Heart left ventricle (tissue), 16 donors: ENCODE measurements at regions of chr10 and their contacts with region 1.

Region 1: DNA sequence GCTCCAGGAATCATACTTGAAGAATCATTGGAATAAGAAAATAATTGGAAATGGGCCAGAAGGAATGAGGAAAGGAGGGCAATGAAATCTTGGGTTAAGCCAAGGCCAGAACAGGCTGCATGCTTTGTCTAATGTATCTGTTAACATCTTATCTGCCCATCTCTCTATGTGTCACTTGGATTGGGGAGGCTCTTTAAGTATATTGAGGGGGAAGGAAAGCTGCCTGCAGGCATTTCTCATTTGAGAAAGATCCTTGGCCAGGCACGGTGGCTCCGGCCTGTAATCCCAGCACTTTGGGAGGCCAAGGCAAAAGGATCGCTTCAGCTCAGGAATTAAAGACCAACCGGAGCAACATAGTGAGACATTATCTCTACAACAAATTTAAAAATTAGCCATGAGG is 14.3 kb downstream of the PCBD1 start:
- DNase-seq: no peak
- ATAC-seq: no peak
- H3K4me3 ChIP-seq: no peak overlapping the region
- H3K27ac ChIP-seq: no peak overlapping the region
- H3K4me1 ChIP-seq: peaks cover 0 to 9% (median 0%) of the 10 kb centered on the region in 12 donors
- H3K27me3 ChIP-seq: no peaks in the 10 kb centered on the region
- CTCF ChIP-seq: no peak
- POLR2A ChIP-seq: no peak

Region 2: GRCh38 chr10:70827086-70827757 is 46.8 kb before region 1 on chr10:
- intact Hi-C with region 1: loop called in 1 of 10 experiments (anchors 5 kb)
- DNase-seq: no peak
- ATAC-seq: no peak
- H3K4me3 ChIP-seq: no peak overlapping the region
- H3K27ac ChIP-seq: no peak overlapping the region
- H3K4me1 ChIP-seq: peaks cover 0 to 33% (median 12%) of the 10 kb centered on the region in 12 donors
- H3K27me3 ChIP-seq: no peaks in the 10 kb centered on the region
- CTCF ChIP-seq: no peak
- POLR2A ChIP-seq: no peak

Region 3: DNA sequence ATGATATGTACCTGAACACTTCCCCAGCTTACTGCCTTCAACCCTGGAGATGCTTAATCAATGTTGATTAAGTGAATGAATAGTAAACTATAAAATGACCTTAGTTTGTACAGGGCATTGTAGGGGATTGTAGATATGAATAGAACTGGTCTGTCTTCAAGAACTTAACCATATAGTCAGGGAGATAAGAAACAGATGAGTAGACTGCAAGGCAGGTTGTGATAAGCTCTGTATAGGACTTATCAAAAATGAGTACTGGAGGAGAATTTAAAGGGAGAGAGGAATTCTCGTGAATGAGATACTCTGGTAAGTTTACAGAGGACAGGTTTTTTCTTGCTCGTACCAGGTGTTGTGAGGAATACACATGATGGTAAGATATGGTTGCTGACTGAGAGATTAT is 30.7 kb before region 1 on chr10:
- intact Hi-C with region 1: no loop called
- DNase-seq: no peak
- ATAC-seq: no peak
- H3K4me3 ChIP-seq: no peak overlapping the region
- H3K27ac ChIP-seq: no peak overlapping the region
- H3K4me1 ChIP-seq: peaks cover 0 to 17% (median 3%) of the 10 kb centered on the region in 12 donors
- H3K27me3 ChIP-seq: no peaks in the 10 kb centered on the region
- CTCF ChIP-seq: no peak
- POLR2A ChIP-seq: no peak